ENCODE measurements at regions of chr15 and their contacts with region 1.

Region 1: DNA sequence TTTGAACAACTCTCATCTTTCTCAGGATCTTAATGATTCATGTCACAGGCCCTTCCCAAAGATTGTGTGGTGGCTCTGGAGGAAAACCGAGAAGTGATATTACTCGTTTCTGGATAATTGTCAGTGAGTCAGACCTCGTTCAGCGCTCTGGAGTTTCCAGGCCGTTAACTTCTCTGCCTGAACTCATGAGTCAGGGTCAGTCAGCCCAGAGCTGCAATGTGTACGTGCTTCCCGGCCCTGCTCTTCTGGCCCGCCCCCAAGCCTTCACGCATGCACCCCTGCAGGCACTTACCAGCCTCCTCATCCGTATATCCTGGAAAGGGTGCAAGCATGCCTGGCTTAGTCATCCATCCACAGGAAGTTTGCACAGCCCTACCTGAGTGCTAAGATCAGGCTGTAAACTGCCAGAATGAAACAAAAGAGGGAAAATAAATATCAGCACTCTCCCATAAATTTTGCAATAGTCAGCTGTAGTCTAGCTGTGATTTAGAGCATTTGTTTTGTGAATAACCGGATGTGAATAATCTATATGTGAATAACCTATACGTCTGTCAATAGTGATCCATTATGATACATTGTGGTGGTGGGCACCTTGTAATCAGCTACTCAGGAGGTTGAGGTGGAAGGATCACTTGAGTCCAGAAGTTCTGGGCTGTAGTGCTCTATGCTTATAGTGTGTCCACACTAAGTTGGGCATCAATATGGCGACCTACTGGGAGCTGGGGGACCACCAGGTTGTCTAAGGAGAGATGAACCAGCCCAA is 35.3 kb upstream of the SEMA4B start:
- DNase-seq: no peak
- ATAC-seq: peak in 1 of 2 donors; percentile 66
- H3K4me3 ChIP-seq: no peak overlapping the region
- H3K27ac ChIP-seq: peak overlapping the region in 1 of 4 donors; percentile 19
- H3K4me1 ChIP-seq: no peaks in the 10 kb centered on the region
- H3K27me3 ChIP-seq: no peaks in the 10 kb centered on the region
- CTCF ChIP-seq: no peak
- POLR2A ChIP-seq: no peak

Region 2: DNA sequence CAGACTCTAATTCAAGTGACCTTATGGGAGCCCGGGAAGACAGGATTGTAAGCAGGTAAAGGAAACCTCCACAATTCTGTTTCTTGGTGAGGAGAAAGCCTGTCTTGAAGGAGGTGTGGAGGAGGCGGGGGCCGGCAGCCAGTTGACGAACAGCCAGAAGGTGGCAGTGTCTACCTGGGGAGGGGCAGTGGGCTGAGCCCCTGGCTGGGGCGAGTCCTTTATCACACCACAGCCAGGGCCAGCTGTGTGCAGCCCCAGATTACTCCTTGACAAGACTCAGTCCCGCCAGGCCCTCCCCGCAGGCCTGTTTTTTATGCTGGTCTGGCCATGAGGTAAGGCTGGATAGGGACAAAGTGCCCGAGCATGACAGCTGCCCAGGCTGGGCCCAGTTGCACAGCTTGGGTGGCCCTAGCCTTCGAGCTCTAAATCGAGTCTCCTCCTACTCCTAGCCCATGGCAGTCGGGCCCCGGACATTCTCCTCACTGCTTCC is 22.6 kb before region 1 on chr15:
- in situ Hi-C with region 1: no loop called
- intact Hi-C with region 1: no loop called
- DNase-seq: peak; percentile 13 to 49
- ATAC-seq: peak; percentile 43 to 56
- H3K4me3 ChIP-seq: no peak overlapping the region
- H3K27ac ChIP-seq: peak overlapping the region in 2 of 4 donors; percentile 38 to 57
- H3K4me1 ChIP-seq: peaks cover 5 to 11% of the 10 kb centered on the region in 2 donors
- H3K27me3 ChIP-seq: no peaks in the 10 kb centered on the region
- CTCF ChIP-seq: peak in 4 of 5 experiments; percentile 23 to 69 (median 60)
- POLR2A ChIP-seq: no peak

Region 3: DNA sequence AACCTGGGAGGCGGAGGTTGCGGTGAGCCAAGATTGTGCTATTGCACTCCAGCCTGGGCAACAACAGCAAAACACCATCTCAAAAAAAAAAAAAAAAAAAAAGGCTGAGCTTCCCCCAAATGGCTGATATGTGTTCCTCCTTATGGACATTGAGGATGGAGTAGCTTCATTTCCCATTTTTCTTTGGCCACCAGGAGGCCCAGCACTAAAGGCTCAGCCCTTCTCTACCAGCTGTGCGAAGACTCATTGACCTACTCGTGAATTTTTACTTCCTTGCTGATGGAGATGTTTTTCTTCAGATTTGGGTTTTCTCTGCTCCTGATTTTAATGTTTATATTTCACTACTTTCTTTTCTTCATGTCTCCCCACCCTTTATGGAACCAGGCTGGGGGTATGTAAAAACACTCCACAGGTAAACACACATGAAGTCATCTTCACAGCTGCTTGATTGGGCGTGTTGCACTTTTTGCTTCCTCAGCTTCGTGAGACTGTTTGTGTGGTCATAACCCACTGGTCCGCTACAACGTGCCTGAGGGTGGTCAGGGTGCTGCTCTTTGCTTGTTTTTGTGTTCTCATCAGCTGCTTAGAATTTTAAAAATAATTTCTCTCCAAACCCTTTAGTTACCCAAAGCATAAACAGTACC is 48.8 kb after region 1 on chr15:
- in situ Hi-C with region 1: loop called in 3 of 4 experiments (anchors 5 kb)
- intact Hi-C with region 1: no loop called
- DNase-seq: no peak
- ATAC-seq: no peak
- H3K4me3 ChIP-seq: no peak overlapping the region
- H3K27ac ChIP-seq: no peak overlapping the region
- H3K4me1 ChIP-seq: no peaks in the 10 kb centered on the region
- H3K27me3 ChIP-seq: no peaks in the 10 kb centered on the region
- CTCF ChIP-seq: peak in 1 of 5 experiments; percentile 9
- POLR2A ChIP-seq: no peak

Region 4: DNA sequence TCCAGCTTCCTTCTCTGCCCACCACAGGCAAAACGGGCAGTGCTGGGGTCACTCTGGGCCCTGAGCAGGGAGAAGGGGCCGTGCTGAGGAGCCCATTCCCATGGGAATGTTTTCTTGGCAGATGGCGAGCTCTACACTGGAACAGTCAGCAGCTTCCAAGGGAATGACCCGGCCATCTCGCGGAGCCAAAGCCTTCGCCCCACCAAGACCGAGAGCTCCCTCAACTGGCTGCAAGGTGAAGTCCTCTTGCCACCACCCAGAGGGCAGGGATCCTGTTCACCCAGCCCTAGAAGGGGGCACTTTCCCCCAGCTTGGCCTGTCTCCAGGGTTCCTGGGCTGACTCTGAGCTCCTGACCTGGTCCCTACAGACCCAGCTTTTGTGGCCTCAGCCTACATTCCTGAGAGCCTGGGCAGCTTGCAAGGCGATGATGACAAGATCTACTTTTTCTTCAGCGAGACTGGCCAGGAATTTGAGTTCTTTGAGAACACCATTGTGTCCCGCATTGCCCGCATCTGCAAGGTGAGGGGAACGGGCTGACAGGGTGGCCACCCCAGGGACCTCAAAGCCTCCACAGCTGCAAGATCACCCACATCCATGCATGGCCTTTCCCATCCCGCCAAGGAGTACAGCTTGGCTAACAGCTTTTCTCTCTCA is 55.5 kb after region 1 on chr15:
- in situ Hi-C with region 1: loop called in 2 of 4 experiments (anchors 5 kb)
- intact Hi-C with region 1: no loop called
- DNase-seq: peak; percentile 75 to 80
- ATAC-seq: peak; percentile 91 to 94
- H3K4me3 ChIP-seq: no peak overlapping the region
- H3K27ac ChIP-seq: peak overlapping the region in 3 of 4 donors; percentile 20 to 42 (median 37)
- H3K4me1 ChIP-seq: peaks cover 6 to 9% of the 10 kb centered on the region in 2 donors
- H3K27me3 ChIP-seq: no peaks in the 10 kb centered on the region
- CTCF ChIP-seq: peak; percentile 51 to 91 (median 86)
- POLR2A ChIP-seq: no peak

Measured in gastrocnemius medialis (tissue), 4 donors.